ENCODE measurements at regions of chr3 and their contacts with region 1.

Region 1: DNA sequence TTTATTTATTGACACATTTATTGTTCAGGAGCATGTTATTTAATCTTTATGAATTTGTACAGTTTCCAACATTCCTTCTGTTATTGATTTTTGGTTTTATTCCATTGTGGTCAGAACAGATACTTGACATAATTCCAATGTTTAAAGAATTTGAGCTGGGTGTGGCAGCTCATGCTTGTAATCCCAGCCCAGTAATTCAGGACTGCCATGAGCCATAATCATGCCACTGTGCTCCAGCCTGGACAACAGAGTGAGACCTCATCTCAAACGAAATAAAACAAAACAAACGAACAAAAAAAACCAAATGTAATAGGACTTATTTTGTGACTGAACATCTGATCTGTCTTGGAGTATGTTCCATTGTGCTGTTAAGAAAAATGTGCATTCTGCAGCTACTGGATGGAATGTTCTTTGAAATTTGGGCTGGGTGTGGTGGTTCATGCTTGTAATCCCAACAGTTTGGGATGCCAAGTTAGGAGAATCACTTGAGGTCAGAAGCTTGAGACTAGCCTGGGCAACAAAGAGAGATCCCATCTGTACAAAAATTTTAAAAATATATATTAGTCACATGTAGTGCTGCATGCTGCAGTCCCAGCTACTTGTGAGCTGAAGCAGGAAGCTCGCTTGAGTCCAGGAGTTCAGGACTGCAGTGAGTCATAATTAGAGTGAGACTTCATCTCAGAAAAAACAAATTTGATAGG is 62.7 kb upstream of the PLSCR4 start:
- DNase-seq: peak; percentile 91
- H3K4me3 ChIP-seq: no peak overlapping the region
- H3K27ac ChIP-seq: peak overlapping the region; percentile 94
- H3K4me1 ChIP-seq: peaks cover 42% of the 10 kb centered on the region
- H3K27me3 ChIP-seq: no peaks in the 10 kb centered on the region
- CTCF ChIP-seq: no peak
- POLR2A ChIP-seq: peak; percentile 50

Region 2: DNA sequence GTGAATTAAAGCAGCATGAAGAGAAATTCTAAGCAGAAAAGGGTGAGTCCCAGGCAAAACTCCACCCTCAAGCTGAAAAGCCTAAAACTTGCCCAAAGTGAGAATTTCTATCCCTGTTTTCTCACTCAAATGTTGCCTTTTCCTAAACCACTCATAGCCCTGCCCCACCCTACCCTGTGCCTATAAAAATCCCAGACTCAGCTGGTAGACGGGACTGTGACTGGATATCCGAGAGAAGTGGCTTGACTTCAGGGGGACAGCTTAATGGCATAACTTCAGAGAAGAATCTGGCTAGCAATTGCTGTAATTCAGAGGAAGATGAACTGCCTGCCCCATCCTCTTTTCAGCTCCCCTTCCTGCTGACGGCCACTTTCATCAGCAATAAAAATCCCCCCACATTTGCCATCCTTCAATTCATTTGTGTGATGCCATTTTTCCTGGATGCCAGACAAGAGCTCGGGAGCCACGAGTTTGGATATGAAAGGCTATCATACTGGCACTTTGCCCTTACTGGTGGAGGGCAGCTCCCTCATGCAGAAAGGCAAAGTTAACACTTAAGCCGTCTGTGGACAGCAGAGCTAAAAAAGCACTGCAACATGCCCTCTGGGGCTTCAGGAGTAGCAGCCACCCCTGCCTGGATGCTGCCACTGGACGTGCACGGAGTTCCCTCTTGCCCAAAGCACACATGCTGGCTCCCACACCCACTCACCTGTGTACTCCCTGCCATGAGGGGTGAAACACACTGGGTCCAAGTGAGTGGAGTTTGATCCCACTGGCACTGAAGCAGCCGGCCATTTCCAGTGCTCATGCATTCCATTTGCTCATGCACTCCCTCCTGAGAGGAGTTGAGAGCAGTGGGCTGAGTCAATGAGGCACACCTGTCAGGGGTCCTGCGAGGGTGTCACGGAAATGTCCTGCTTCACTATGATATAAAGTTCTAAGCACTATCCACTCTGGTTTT is 823.2 kb before region 1 on chr3:
- CTCF ChIA-PET with region 1: no interaction called
- POLR2A ChIA-PET with region 1: no interaction called
- dilution Hi-C with region 1: no loop called
- intact Hi-C with region 1: no loop called
- DNase-seq: no peak
- H3K4me3 ChIP-seq: no peak overlapping the region
- H3K27ac ChIP-seq: no peak overlapping the region
- H3K4me1 ChIP-seq: no peaks in the 10 kb centered on the region
- H3K27me3 ChIP-seq: no peaks in the 10 kb centered on the region
- CTCF ChIP-seq: no peak
- POLR2A ChIP-seq: no peak

Region 3: DNA sequence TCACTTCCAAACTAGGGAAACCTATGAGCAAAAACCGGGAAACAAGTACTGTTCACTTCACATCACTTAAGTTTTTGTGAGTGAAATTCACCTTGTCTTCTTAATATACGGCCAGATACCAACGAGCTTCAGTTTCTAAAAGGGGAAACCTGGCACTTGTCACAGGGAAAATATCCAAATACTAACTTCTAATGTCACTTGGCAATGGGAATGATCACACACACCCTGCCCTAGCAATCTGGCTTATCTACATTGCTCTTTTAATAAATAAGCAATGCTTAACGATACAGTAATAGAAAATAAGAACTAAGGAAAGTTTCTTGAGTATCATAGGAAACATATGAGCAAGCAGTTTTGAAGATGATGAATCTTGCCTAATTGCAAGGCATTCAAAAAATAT is 118.0 kb before region 1 on chr3:
- CTCF ChIA-PET with region 1: interaction called, 4 read pairs
- POLR2A ChIA-PET with region 1: interaction called, 3 read pairs
- dilution Hi-C with region 1: no loop called
- intact Hi-C with region 1: loop called (anchors 1 kb)
- DNase-seq: no peak
- H3K4me3 ChIP-seq: no peak overlapping the region
- H3K27ac ChIP-seq: peak overlapping the region; percentile 81
- H3K4me1 ChIP-seq: peaks cover 45% of the 10 kb centered on the region
- H3K27me3 ChIP-seq: no peaks in the 10 kb centered on the region
- CTCF ChIP-seq: no peak
- POLR2A ChIP-seq: no peak

Region 4: DNA sequence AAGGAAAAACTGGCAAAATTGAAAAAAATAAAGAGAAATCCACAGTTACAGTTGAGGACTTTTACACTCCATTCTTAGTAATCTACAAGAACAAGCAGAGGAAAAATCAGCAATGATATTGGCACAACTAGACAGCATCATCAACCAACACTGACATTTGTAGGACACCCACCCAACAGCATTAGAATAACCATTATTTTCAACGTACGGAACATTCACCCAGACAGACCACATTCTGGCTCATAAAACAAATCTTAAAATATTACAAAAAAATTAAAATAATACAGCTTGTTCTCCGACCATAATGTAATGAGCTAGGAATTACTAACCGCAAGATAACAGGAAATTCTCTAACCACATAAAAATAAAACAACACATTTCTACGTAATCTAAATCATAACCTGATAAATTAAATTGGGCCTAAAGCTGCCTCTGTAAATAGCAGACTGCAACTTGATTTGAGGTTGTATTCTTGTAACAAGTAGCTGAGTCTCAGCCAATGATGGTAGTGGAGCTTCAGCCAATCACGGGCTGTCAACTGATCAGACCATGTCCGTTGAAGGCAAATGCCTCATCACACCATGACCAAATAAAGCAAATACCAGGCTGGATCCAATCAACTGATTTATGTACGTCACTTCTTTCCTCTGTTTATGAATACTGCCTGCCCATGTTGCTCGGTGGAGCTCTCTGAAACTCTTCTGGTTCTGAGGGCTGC is 71.9 kb before region 1 on chr3:
- CTCF ChIA-PET with region 1: interaction called, 6 read pairs
- POLR2A ChIA-PET with region 1: no interaction called
- dilution Hi-C with region 1: no loop called
- intact Hi-C with region 1: loop called (anchors 1 kb)
- DNase-seq: peak; percentile 59
- H3K4me3 ChIP-seq: no peak overlapping the region
- H3K27ac ChIP-seq: peak overlapping the region; percentile 71
- H3K4me1 ChIP-seq: peaks cover 13% of the 10 kb centered on the region
- H3K27me3 ChIP-seq: no peaks in the 10 kb centered on the region
- CTCF ChIP-seq: no peak
- POLR2A ChIP-seq: peak; percentile 29

Region 5: GRCh38 chr3:146250449-146251382 is 62.8 kb before region 1 on chr3 and contains the start of gene PLSCR4:
- CTCF ChIA-PET with region 1: no interaction called
- POLR2A ChIA-PET with region 1: no interaction called
- dilution Hi-C with region 1: no loop called
- intact Hi-C with region 1: loop called (anchors 1 kb)
- DNase-seq: peak; percentile 93
- H3K4me3 ChIP-seq: peak within 1 kb of the TSS; percentile 94 to 97 (median 96)
- H3K27ac ChIP-seq: peak within 1 kb of the TSS; percentile 77
- H3K4me1 ChIP-seq: peaks cover 36% of the 10 kb centered on the region
- H3K27me3 ChIP-seq: no peaks in the 10 kb centered on the region
- CTCF ChIP-seq: no peak
- POLR2A ChIP-seq: peak; percentile 35
- total RNA-seq, gene PLSCR4: 81.5 and 91.8 TPM in 2 replicates

Region 6: DNA sequence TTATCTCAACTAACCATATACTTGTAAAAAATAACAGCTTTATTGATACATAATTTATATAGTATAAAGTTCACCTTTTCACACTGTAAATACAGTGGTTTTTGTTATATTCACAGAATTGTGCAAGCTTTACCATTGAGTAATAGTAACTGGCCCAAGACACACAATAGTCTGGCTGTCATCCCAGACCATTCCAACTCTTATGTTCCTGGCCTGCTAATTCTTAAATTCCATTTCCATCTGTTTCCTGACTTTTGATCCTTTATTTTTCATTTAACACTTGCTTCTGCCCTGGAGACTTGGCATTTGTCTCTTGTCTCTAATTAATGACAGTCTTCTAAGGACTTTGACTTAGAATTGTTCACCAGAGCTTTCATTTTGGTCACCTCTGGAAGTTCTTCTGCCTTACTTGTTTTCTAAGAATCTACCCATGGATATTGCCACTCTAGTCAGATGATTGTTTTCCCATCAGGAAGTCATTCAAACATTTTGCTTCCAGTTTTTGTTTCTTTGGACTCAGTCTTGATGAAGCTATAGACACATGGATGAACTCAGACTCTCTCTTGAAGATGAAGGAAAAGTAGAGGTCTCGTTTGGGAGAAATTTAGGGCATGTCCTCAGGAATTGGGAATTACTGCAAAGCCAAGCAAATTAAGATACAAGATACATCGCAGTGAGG is 35.5 kb before region 1 on chr3:
- CTCF ChIA-PET with region 1: interaction called, 18 read pairs
- POLR2A ChIA-PET with region 1: interaction called, 10 read pairs
- dilution Hi-C with region 1: no loop called
- intact Hi-C with region 1: loop called (anchors 1 kb)
- DNase-seq: peak; percentile 97
- H3K4me3 ChIP-seq: no peak overlapping the region
- H3K27ac ChIP-seq: peak overlapping the region; percentile 89
- H3K4me1 ChIP-seq: peaks cover 57% of the 10 kb centered on the region
- H3K27me3 ChIP-seq: no peaks in the 10 kb centered on the region
- CTCF ChIP-seq: no peak
- POLR2A ChIP-seq: peak; percentile 66

Region 7: GRCh38 chr3:146503461-146504202 is 190.1 kb after region 1 on chr3:
- CTCF ChIA-PET with region 1: no interaction called
- POLR2A ChIA-PET with region 1: no interaction called
- dilution Hi-C with region 1: no loop called
- intact Hi-C with region 1: loop called (anchors 2 kb)
- DNase-seq: peak; percentile 45
- H3K4me3 ChIP-seq: no peak overlapping the region
- H3K27ac ChIP-seq: no peak overlapping the region
- H3K4me1 ChIP-seq: peaks cover 35% of the 10 kb centered on the region
- H3K27me3 ChIP-seq: no peaks in the 10 kb centered on the region
- CTCF ChIP-seq: no peak
- POLR2A ChIP-seq: no peak